Activated B cell treated with CpG ODN at 0.5 μM for 24 hours (primary cell): ENCODE measurements at regions of chr2 and their contacts with region 1.

Region 1: DNA sequence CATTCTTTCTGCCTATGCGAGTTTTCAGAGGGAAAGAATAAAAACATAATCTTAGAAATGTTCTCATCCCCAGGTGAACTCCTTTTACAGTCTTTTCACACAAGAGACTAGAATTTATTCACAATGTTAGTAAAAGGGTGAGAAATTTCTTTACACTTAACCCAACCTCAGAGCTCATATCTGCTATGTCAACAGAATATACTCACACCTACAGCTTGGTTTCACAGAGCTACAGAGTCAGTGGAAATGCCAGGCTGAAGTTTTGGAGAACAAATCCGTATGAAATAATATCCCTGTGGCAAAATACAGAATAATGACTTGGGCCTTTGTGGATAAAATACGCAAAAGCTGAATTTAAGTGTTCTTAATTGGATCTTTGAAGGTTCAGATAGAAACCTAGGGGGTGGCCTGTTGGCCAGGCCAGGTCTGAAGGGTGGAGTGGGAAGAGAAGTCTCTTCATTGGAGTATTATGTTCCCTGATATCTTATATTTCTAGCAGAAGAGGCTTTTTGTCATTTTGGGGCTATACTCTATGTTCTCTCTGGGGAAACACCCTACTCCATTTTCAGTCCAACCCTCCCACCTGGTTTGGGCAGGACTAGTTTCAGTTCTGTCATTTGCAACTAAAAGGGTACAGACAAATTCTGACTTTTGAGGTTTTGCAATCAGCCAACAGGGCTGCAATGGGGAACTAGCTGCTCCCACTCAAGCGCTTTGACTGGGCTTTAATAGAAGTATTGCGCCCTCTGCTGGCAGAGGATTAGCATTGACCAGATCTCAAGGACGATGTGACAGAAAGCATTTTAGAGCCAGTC is 25.7 kb downstream of the FBXO48 start:
- DNase-seq: peak; percentile 57
- ATAC-seq: peak; percentile 98
- H3K4me3 Mint-ChIP-seq: peak overlapping the region; percentile 65
- H3K27ac Mint-ChIP-seq: peak overlapping the region; percentile 95
- H3K4me1 Mint-ChIP-seq: peaks cover 51% of the 10 kb centered on the region
- H3K27me3 Mint-ChIP-seq: no peaks in the 10 kb centered on the region
- CTCF ChIP-seq: no peak

Region 2: DNA sequence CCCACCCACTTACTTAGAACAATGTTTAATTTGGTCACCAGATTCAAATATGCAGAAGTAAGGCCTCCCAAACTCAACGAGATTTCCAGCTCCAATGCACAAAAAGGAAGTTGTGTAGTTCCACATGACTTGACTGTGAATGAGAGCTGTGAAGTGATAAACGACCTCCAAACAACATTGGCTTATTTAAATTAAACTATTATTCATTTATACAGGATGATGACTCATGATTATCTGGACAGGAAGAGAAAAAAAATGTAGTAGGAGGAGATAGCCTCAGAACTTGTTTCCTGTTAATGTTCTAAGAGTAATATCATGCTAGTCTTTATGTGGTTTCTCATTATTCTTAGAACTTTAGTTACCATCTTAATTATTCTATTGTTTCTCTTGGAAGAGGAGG is 615.9 kb before region 1 on chr2:
- CTCF ChIA-PET with region 1: no interaction called
- POLR2A ChIA-PET with region 1: no interaction called
- intact Hi-C with region 1: no loop called
- DNase-seq: no peak
- ATAC-seq: peak; percentile 86
- H3K4me3 Mint-ChIP-seq: peak overlapping the region; percentile 37
- H3K27ac Mint-ChIP-seq: no peak overlapping the region
- H3K4me1 Mint-ChIP-seq: peaks cover 23% of the 10 kb centered on the region
- H3K27me3 Mint-ChIP-seq: no peaks in the 10 kb centered on the region
- CTCF ChIP-seq: no peak

Region 3: DNA sequence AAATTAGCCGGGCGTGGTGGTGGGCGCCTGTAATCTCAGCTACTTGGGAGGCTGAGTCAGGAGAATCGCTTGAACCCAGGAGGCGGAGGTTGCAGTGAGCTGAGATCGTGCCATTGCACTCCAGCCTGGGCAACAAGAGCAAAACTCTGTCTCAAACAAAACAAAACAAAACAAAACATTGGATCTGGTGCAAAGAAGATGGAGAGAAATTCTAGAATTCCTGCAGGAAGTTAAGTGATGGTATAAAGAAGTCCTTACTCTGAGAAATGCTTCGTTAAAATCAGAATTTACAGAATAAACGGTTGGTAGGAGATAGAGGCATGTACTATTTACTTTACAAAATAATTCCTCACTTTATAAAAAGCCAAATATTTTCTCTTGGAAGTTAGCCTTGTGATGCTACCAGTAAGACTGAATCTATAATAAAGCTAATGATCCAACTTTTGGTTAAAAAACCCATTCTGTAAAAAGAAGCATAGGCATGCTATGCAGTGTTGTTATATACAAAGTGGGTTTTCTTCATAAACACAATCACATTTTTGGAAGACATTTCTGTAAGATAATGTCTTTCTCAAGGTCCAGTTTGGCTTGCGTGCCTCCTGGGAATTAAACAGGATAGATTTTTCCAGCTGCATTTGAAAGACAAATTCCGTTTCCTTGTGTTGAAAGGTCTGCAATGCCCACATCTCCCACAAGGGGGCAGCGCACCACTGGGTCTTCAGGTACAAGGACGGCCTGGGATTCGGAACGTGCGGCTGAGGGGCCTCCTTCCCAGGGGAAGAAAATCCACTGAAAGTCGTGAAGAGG is 319.3 kb before region 1 on chr2:
- CTCF ChIA-PET with region 1: interaction called, 12 read pairs
- POLR2A ChIA-PET with region 1: no interaction called
- intact Hi-C with region 1: loop called (anchors 1 kb)
- DNase-seq: peak; percentile 69
- ATAC-seq: peak; percentile 26
- H3K4me3 Mint-ChIP-seq: peak overlapping the region; percentile 77
- H3K27ac Mint-ChIP-seq: peak overlapping the region; percentile 97
- H3K4me1 Mint-ChIP-seq: peaks cover 48% of the 10 kb centered on the region
- H3K27me3 Mint-ChIP-seq: no peaks in the 10 kb centered on the region
- CTCF ChIP-seq: peak; percentile 100

Region 4: GRCh38 chr2:68251187-68251854 is 190.1 kb before region 1 on chr2:
- CTCF ChIA-PET with region 1: interaction called, 6 read pairs
- POLR2A ChIA-PET with region 1: interaction called, 19 read pairs
- intact Hi-C with region 1: loop called (anchors 1 kb)
- DNase-seq: peak; percentile 41
- ATAC-seq: peak; percentile 66
- H3K4me3 Mint-ChIP-seq: peak overlapping the region; percentile 89
- H3K27ac Mint-ChIP-seq: peak overlapping the region; percentile 92
- H3K4me1 Mint-ChIP-seq: peaks cover 35% of the 10 kb centered on the region
- H3K27me3 Mint-ChIP-seq: no peaks in the 10 kb centered on the region
- CTCF ChIP-seq: no peak

Region 5: DNA sequence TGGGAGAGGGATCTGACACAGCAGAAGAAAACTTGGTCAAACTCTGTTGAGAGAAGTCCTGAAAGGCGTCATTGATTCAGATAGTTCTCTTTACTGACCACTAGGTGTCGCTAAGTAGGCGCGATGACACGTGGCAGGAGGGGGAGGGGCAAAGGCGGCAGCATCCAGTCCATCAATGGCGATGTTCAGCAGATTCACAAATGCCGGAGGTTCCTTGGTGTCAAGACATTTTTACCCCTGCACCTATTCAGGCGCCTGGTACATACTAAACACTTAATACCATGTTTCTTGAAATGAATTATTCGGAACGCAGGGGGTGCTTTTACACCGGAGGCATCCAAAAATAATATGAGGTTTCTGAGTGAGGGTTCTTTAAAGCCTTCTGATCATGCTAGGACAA is 79.3 kb before region 1 on chr2:
- CTCF ChIA-PET with region 1: interaction called, 47 read pairs
- POLR2A ChIA-PET with region 1: interaction called, 22 read pairs
- intact Hi-C with region 1: loop called (anchors 1 kb)
- DNase-seq: peak; percentile 63
- ATAC-seq: peak; percentile 66
- H3K4me3 Mint-ChIP-seq: peak overlapping the region; percentile 84
- H3K27ac Mint-ChIP-seq: peak overlapping the region; percentile 91
- H3K4me1 Mint-ChIP-seq: peaks cover 56% of the 10 kb centered on the region
- H3K27me3 Mint-ChIP-seq: no peaks in the 10 kb centered on the region
- CTCF ChIP-seq: peak; percentile 33

Region 6: DNA sequence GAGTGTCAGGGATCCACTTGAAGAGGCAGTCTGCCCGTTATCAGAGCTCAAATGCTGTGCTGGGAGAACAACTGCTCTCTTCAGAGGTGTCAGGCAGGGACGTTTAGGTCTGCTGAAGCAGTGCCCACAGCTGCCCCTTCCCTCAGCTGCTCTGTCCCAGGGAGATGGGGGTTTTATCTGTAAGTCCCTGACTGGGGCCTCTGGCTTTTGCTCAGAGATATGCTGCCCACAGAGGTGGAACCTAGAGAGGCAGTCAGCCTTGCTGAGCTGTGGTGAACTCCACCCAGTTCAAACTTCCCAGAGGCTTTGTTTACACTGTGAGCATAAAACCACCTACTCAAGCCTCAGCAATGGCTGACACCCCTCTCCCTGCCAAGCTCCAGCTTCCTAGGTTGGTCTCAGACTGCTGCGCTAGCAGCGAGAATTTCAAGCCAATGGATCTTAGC is 38.2 kb before region 1 on chr2:
- CTCF ChIA-PET with region 1: interaction called, 13 read pairs
- POLR2A ChIA-PET with region 1: interaction called, 11 read pairs
- intact Hi-C with region 1: loop called (anchors 2 kb)
- DNase-seq: peak; percentile 43
- ATAC-seq: peak; percentile 89
- H3K4me3 Mint-ChIP-seq: peak overlapping the region; percentile 63
- H3K27ac Mint-ChIP-seq: peak overlapping the region; percentile 88
- H3K4me1 Mint-ChIP-seq: peaks cover 98% of the 10 kb centered on the region
- H3K27me3 Mint-ChIP-seq: no peaks in the 10 kb centered on the region
- CTCF ChIP-seq: no peak

Region 7: GRCh38 chr2:68418855-68419254 is 22.5 kb before region 1 on chr2:
- CTCF ChIA-PET with region 1: interaction called, 17 read pairs
- POLR2A ChIA-PET with region 1: interaction called, 4 read pairs
- intact Hi-C with region 1: loop called (anchors 1 kb)
- DNase-seq: no peak
- ATAC-seq: no peak
- H3K4me3 Mint-ChIP-seq: no peak overlapping the region
- H3K27ac Mint-ChIP-seq: peak overlapping the region; percentile 67
- H3K4me1 Mint-ChIP-seq: peaks cover 81% of the 10 kb centered on the region
- H3K27me3 Mint-ChIP-seq: no peaks in the 10 kb centered on the region
- CTCF ChIP-seq: no peak